ENCODE measurements at regions of chr4 and their contacts with region 1.

Region 1: GRCh38 chr4:149370785-149371420 is 444.7 kb downstream of the IQCM start:
- DNase-seq: peak; percentile 13
- ATAC-seq: peak; percentile 87; the same call in 1 of the 2 replicates
- H3K4me3 ChIP-seq: no peak overlapping the region
- H3K27ac ChIP-seq: no peak overlapping the region
- H3K4me1 ChIP-seq: no peaks in the 10 kb centered on the region
- H3K27me3 ChIP-seq: no peaks in the 10 kb centered on the region
- CTCF ChIP-seq: peak; percentile 58

Region 2: DNA sequence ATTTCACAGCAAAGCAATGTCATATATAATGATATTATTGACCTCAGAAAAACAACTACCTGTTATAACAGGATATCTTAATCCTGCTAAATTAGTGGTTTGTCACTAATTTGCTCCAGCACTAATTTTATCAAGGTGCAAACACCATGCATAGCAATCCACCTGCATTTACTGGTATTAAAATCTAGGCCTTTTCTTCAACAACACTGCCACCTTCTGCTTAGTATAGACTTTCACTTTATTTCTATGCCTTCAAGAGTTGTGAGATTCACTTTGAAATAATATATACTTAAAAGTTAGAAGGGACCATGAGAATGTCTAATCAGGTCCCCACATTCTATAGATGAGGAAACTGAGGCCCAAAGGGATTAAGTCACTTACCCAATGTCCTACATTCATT is 526.9 kb after region 1 on chr4:
- CTCF ChIA-PET with region 1: no interaction called
- POLR2A ChIA-PET with region 1: no interaction called
- in situ Hi-C with region 1: no loop called
- intact Hi-C with region 1: loop called (anchors 1 kb)
- DNase-seq: no peak
- ATAC-seq: no peak
- H3K4me3 ChIP-seq: no peak overlapping the region
- H3K27ac ChIP-seq: no peak overlapping the region
- H3K4me1 ChIP-seq: no peaks in the 10 kb centered on the region
- H3K27me3 ChIP-seq: no peaks in the 10 kb centered on the region
- CTCF ChIP-seq: peak; percentile 45; the same call in 1 of the 2 replicates

Measured in Panc1 (cell line).